Mammary epithelial cell (primary cell): ENCODE measurements at regions of chr12 and their contacts with region 1.

Region 1: GRCh38 chr12:46364777-46365580 is 7.6 kb downstream of the SLC38A2 start:
- DNase-seq: peak; percentile 73
- H3K4me3 ChIP-seq: no peak overlapping the region
- H3K27ac ChIP-seq: peak overlapping the region; percentile 46
- H3K4me1 ChIP-seq: peaks cover 48% of the 10 kb centered on the region
- H3K27me3 ChIP-seq: no peaks in the 10 kb centered on the region
- CTCF ChIP-seq: no peak

Region 2: GRCh38 chr12:46473634-46474329 is 108.8 kb after region 1 on chr12:
- CTCF ChIA-PET with region 1: no interaction called
- dilution Hi-C with region 1: loop called (anchors 5 kb)
- in situ Hi-C with region 1: no loop called
- intact Hi-C with region 1: no loop called
- DNase-seq: peak; percentile 83
- H3K4me3 ChIP-seq: peak overlapping the region in 1 of 3 experiments; percentile 11
- H3K27ac ChIP-seq: peak overlapping the region; percentile 67
- H3K4me1 ChIP-seq: peaks cover 38% of the 10 kb centered on the region
- H3K27me3 ChIP-seq: no peaks in the 10 kb centered on the region
- CTCF ChIP-seq: no peak